GM12878 (cell line): ENCODE measurements at regions of chr11 and their contacts with region 1.

Region 1: GRCh38 chr11:128709402-128709801 is 15.5 kb downstream of the FLI1 start:
- DNase-seq: no peak
- ATAC-seq: no peak
- H3K4me3 ChIP-seq: no peak overlapping the region
- H3K27ac ChIP-seq: no peak overlapping the region
- H3K4me1 ChIP-seq: peaks cover 19% of the 10 kb centered on the region
- H3K27me3 ChIP-seq: no peaks in the 10 kb centered on the region
- CTCF ChIP-seq: no peak
- EP300 ChIP-seq: no peak
- POLR2A ChIP-seq: no peak
- RAD21 ChIP-seq: no peak

Region 2: DNA sequence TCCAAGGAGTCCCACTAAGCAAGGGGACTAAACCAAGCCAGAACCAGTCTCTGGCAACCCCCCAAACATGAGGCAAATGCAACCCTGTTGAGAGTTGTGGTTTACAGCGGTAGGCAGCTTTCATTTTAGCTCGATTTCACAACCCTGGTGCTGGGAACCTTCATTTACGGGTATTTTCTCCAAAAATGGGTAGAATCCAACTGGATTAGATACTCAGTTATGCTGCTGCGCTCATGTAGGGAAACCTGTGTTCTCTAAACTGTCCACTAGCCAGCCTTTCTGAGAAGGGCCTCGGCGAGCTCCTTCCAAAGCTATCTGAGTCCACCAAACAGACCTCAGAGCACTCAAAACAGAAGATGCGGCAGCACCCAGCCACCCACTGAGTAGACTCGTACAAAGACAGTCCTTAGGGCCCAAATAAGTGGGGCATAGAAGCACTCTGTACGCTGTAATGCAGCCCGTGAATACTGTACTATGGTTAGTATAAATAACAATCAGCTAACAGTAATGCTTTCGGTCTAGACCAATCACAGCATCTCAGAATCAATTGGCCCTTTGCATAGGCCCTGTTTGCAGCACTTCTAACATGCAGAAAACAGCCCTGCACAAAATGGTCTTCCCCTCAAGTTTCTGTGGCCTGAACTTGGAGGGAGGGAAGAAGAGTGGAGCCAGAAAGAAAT is 226.8 kb before region 1 on chr11:
- CTCF ChIA-PET with region 1: no interaction called
- POLR2A ChIA-PET with region 1: no interaction called
- RAD21 ChIA-PET with region 1: no interaction called
- SMC1A ChIA-PET with region 1: no interaction called
- in situ Hi-C with region 1: no loop called
- intact Hi-C with region 1: no loop called
- DNase-seq: no peak
- ATAC-seq: peak; percentile 81
- H3K4me3 ChIP-seq: peak overlapping the region; percentile 37
- H3K27ac ChIP-seq: peak overlapping the region; percentile 97
- H3K4me1 ChIP-seq: peaks cover 42% of the 10 kb centered on the region
- H3K27me3 ChIP-seq: no peaks in the 10 kb centered on the region
- CTCF ChIP-seq: no peak
- EP300 ChIP-seq: peak in 1 of 2 experiments; percentile 44; a peak in 1 of 4 replicates
- POLR2A ChIP-seq: peak; percentile 64
- RAD21 ChIP-seq: 0 out of 2 replicates have a peak, but pooled peaks have one; percentile 1

Region 3: GRCh38 chr11:128720522-128720985 is 11.2 kb after region 1 on chr11:
- CTCF ChIA-PET with region 1: interaction called, 5 read pairs
- POLR2A ChIA-PET with region 1: interaction called, 9 read pairs
- RAD21 ChIA-PET with region 1: interaction called, 10 read pairs
- SMC1A ChIA-PET with region 1: interaction called, 263 read pairs
- in situ Hi-C with region 1: no loop called
- intact Hi-C with region 1: no loop called
- DNase-seq: no peak
- ATAC-seq: peak; percentile 59
- H3K4me3 ChIP-seq: peak overlapping the region; percentile 78
- H3K27ac ChIP-seq: peak overlapping the region; percentile 94
- H3K4me1 ChIP-seq: peaks cover 85% of the 10 kb centered on the region
- H3K27me3 ChIP-seq: no peaks in the 10 kb centered on the region
- CTCF ChIP-seq: no peak
- EP300 ChIP-seq: no peak
- POLR2A ChIP-seq: peak; percentile 84
- RAD21 ChIP-seq: 0 out of 2 replicates have a peak, but pooled peaks have one; percentile 1